CD8-positive, alpha-beta T cell (primary cell): ENCODE measurements at regions of chr7 and their contacts with region 1.

Region 1: GRCh38 chr7:1532483-1533424 is 2.3 kb downstream of the MAFK start:
- DNase-seq: peak in 8 of 9 experiments; percentile 42 to 75 (median 68)
- ATAC-seq: peak; percentile 48
- H3K4me3 ChIP-seq: peak overlapping the region; percentile 65 to 66
- H3K4me3 Mint-ChIP-seq: peak overlapping the region; percentile 89
- H3K27ac ChIP-seq: peak overlapping the region; percentile 82 to 90
- H3K27ac Mint-ChIP-seq: peak overlapping the region; percentile 99
- H3K4me1 ChIP-seq: peaks cover 33% of the 10 kb centered on the region
- H3K4me1 Mint-ChIP-seq: peaks cover 38% of the 10 kb centered on the region
- H3K27me3 ChIP-seq: no peaks in the 10 kb centered on the region
- H3K27me3 Mint-ChIP-seq: no peaks in the 10 kb centered on the region
- CTCF ChIP-seq: no peak

Region 2: DNA sequence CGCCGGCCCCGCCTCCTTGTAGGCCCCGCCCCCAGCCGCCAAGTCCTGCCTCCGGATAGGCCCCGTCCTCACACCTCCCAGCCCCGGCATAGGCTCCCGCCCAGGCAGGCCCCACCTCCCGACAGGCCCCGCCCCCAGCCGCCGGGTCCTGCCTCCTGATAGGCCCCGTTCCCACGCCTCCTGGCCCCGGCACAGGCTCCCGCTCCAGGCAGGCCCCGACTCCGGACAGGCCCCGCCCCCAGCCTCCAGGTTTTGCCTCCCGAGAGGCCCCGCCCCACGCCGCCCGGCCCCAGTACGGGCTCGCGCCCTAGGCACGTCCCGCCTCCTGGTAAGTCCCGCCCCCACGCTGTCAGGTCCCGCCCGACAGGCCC is 73.2 kb before region 1 on chr7:
- CTCF ChIA-PET with region 1: no interaction called
- POLR2A ChIA-PET with region 1: no interaction called
- intact Hi-C with region 1: loop called (anchors 1 to 2 kb)
- DNase-seq: peak; percentile 90 to 98 (median 97)
- ATAC-seq: peak; percentile 95
- H3K4me3 ChIP-seq: peak overlapping the region; percentile 65 to 90
- H3K4me3 Mint-ChIP-seq: peak overlapping the region; percentile 77
- H3K27ac ChIP-seq: no peak overlapping the region
- H3K27ac Mint-ChIP-seq: no peak overlapping the region
- H3K4me1 ChIP-seq: peaks cover 24% of the 10 kb centered on the region
- H3K4me1 Mint-ChIP-seq: peaks cover 17% of the 10 kb centered on the region
- H3K27me3 ChIP-seq: no peaks in the 10 kb centered on the region
- H3K27me3 Mint-ChIP-seq: no peaks in the 10 kb centered on the region
- CTCF ChIP-seq: no peak

Region 3: DNA sequence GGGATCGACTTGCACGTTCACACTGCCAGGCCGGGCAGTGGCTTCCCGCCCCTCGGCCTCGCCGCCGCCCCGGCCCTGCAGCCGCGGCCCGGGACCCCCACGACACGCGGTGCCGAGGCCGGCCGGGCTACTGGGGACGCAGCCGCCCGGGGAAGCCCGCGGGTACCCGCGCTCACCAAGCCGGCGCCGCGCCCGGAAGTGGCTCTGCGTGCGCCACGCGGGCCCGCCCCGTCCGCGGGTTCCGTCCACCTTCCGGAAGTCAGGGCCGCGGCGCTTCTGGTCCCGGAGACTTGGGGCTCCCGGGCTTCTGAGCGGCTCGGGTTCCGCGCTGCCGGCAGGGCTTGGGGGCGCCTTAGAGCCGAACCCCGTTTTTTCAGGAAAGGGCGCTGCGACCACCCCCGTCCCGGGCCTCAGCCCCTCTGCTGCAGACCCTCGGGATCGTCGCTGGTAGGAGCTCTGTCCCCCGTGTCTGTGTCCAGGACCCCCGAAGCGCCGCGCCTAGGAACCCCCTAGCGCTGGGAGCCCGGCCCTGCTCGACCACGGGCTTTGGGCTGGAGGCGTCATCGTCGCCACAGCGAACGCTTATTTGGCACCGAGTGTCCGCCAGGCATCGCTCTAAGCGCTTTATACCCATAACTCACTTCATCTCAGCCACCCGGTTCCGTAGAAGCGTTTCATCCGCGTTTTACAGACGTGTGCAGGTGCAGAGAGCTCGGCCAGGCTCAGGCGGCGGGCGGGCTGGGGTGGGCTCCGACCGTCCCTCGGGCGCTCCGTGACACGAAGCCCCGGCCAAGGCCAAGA is 37.3 kb after region 1 on chr7 and contains the start of gene PSMG3:
- CTCF ChIA-PET with region 1: no interaction called
- POLR2A ChIA-PET with region 1: no interaction called
- intact Hi-C with region 1: loop called (anchors 1 kb)
- DNase-seq: peak; percentile 77 to 93 (median 88)
- ATAC-seq: peak; percentile 87
- H3K4me3 ChIP-seq: peak within 1 kb of the TSS; percentile 64 to 95
- H3K4me3 Mint-ChIP-seq: peak within 1 kb of the TSS; percentile 87
- H3K27ac ChIP-seq: peak within 1 kb of the TSS; percentile 69 to 90
- H3K27ac Mint-ChIP-seq: peak within 1 kb of the TSS; percentile 91
- H3K4me1 ChIP-seq: peaks cover 16% of the 10 kb centered on the region
- H3K4me1 Mint-ChIP-seq: peaks cover 29% of the 10 kb centered on the region
- H3K27me3 ChIP-seq: no peaks in the 10 kb centered on the region
- H3K27me3 Mint-ChIP-seq: no peaks in the 10 kb centered on the region
- CTCF ChIP-seq: no peak
- total RNA-seq, gene PSMG3: 20.9 to 21.0 TPM

Region 4: GRCh38 chr7:1725199-1725690 is 192.5 kb after region 1 on chr7:
- CTCF ChIA-PET with region 1: no interaction called
- POLR2A ChIA-PET with region 1: no interaction called
- intact Hi-C with region 1: no loop called
- DNase-seq: no peak
- ATAC-seq: no peak
- H3K4me3 ChIP-seq: no peak overlapping the region
- H3K4me3 Mint-ChIP-seq: no peak overlapping the region
- H3K27ac ChIP-seq: no peak overlapping the region
- H3K27ac Mint-ChIP-seq: no peak overlapping the region
- H3K4me1 ChIP-seq: no peaks in the 10 kb centered on the region
- H3K4me1 Mint-ChIP-seq: no peaks in the 10 kb centered on the region
- H3K27me3 ChIP-seq: peaks cover 0 to 3% of the 10 kb centered on the region in 2 experiments
- H3K27me3 Mint-ChIP-seq: peaks cover 9% of the 10 kb centered on the region
- CTCF ChIP-seq: no peak

Region 5: GRCh38 chr7:2519119-2519930 is 986.6 kb after region 1 on chr7 and contains the start of gene LFNG:
- CTCF ChIA-PET with region 1: no interaction called
- POLR2A ChIA-PET with region 1: no interaction called
- intact Hi-C with region 1: loop called in 1 of 2 experiments (anchors 10 kb)
- DNase-seq: peak; percentile 58 to 94 (median 85)
- ATAC-seq: peak; percentile 63
- H3K4me3 ChIP-seq: peak within 1 kb of the TSS; percentile 98 to 100
- H3K4me3 Mint-ChIP-seq: peak within 1 kb of the TSS; percentile 96
- H3K27ac ChIP-seq: peak within 1 kb of the TSS; percentile 53 to 63
- H3K27ac Mint-ChIP-seq: peak within 1 kb of the TSS; percentile 94
- H3K4me1 ChIP-seq: peaks cover 37% of the 10 kb centered on the region
- H3K4me1 Mint-ChIP-seq: peaks cover 44% of the 10 kb centered on the region
- H3K27me3 ChIP-seq: no peaks in the 10 kb centered on the region
- H3K27me3 Mint-ChIP-seq: no peaks in the 10 kb centered on the region
- CTCF ChIP-seq: no peak
- total RNA-seq, gene LFNG: 137 to 140 TPM